ENCODE measurements at regions of chr5 and their contacts with region 1.

Region 1: GRCh38 chr5:95808686-95809413 is 13.7 kb downstream of the GLRX start:
- DNase-seq: peak; percentile 70
- ATAC-seq: peak; percentile 100
- H3K4me3 Mint-ChIP-seq: peak overlapping the region; percentile 78
- H3K27ac Mint-ChIP-seq: peak overlapping the region; percentile 92
- H3K4me1 Mint-ChIP-seq: peaks cover 54% of the 10 kb centered on the region
- H3K27me3 Mint-ChIP-seq: no peaks in the 10 kb centered on the region

Region 2: GRCh38 chr5:95822542-95823181 is 13.8 kb after region 1 on chr5 and contains the start of gene GLRX:
- POLR2A ChIA-PET with region 1: interaction called, 97 read pairs
- DNase-seq: peak; percentile 63
- ATAC-seq: peak; percentile 32
- H3K4me3 Mint-ChIP-seq: peak within 1 kb of the TSS; percentile 98
- H3K27ac Mint-ChIP-seq: peak within 1 kb of the TSS; percentile 93
- H3K4me1 Mint-ChIP-seq: peaks cover 62% of the 10 kb centered on the region
- H3K27me3 Mint-ChIP-seq: no peaks in the 10 kb centered on the region
- total RNA-seq, gene GLRX: 70.6 to 72.9 TPM